Common myeloid progenitor, CD34-positive (primary cell): ENCODE measurements at regions of chr14 and their contacts with region 1.

Region 1: DNA sequence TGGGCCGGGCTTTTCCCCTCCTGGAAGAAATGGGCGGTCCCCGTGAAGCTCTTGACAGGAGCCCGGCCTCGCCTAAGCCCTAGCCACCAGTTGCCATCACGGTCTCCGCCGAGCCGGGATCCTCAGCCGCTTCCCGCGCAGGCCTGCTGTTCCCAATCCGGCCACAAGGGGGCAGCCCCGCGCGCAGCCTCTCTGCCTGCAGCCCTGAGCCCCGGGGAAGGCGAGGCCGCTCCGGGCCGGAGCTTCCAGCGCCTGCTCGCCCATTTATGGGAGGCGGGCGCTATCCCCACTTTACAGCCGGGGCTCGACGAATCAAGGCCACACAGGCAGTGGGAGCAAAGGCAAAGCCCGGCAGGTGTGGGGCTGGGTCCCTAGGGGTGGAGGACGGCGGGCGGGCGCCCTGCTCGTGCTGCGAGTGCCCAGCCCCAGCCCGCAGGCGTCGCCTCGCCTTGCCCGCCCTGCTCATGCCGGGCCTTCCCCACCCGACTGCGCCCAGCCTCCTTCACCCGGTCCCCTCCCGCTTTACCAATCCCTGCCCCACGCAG is 61.5 kb downstream of the LGMN start:
- DNase-seq: peak in 2 of 3 donors; percentile 44 to 68
- H3K4me3 ChIP-seq: no peak overlapping the region
- H3K27ac ChIP-seq: no peak overlapping the region
- H3K4me1 ChIP-seq: peaks cover 0 to 3% (median 2%) of the 10 kb centered on the region in 4 experiments
- H3K27me3 ChIP-seq: no peaks in the 10 kb centered on the region

Region 2: DNA sequence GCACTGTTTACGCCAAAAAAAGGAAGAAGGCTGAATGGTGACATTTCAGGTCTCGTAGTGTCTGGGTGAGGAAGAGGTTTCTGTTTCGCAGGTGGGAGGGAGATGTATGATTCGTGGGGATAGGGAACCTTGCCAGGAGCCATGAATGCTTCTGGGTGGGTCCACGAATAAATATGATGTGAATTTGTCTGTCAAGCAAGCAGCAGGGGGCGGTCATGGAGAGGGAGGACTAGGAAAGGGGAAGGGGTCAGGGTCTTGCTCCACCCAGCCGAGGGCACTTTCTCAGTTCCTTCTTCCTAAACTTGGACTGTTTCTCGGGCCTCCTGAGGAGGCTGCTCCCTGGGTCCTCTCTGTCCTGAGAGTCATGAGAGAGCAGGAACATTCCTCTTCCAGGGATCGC is 11.0 kb before region 1 on chr14:
- CTCF ChIA-PET with region 1: interaction called, 44 read pairs
- POLR2A ChIA-PET with region 1: no interaction called
- DNase-seq: peak in 2 of 3 donors; percentile 66
- H3K4me3 ChIP-seq: peak overlapping the region in 2 of 7 experiments; percentile 17 to 27
- H3K27ac ChIP-seq: peak overlapping the region; percentile 19 to 60
- H3K4me1 ChIP-seq: peaks cover 0 to 54% (median 47%) of the 10 kb centered on the region in 4 experiments
- H3K27me3 ChIP-seq: no peaks in the 10 kb centered on the region

Region 3: GRCh38 chr14:92704036-92704804 is 17.2 kb after region 1 on chr14:
- CTCF ChIA-PET with region 1: interaction called, 11 read pairs
- POLR2A ChIA-PET with region 1: no interaction called
- DNase-seq: peak; percentile 24 to 85 (median 76)
- H3K4me3 ChIP-seq: peak overlapping the region in 4 of 7 experiments; percentile 8 to 53 (median 45)
- H3K27ac ChIP-seq: no peak overlapping the region
- H3K4me1 ChIP-seq: peaks cover 4 to 33% (median 21%) of the 10 kb centered on the region in 4 experiments
- H3K27me3 ChIP-seq: no peaks in the 10 kb centered on the region

Region 4: GRCh38 chr14:92783816-92784431 is 97.0 kb after region 1 on chr14:
- CTCF ChIA-PET with region 1: interaction called, 61 read pairs
- POLR2A ChIA-PET with region 1: no interaction called
- DNase-seq: peak; percentile 66 to 81 (median 77)
- H3K4me3 ChIP-seq: no peak overlapping the region
- H3K27ac ChIP-seq: no peak overlapping the region
- H3K4me1 ChIP-seq: peaks cover 0 to 6% (median 2%) of the 10 kb centered on the region in 4 experiments
- H3K27me3 ChIP-seq: no peaks in the 10 kb centered on the region